ENCODE measurements at regions of chr2 and their contacts with region 1.

Region 1: DNA sequence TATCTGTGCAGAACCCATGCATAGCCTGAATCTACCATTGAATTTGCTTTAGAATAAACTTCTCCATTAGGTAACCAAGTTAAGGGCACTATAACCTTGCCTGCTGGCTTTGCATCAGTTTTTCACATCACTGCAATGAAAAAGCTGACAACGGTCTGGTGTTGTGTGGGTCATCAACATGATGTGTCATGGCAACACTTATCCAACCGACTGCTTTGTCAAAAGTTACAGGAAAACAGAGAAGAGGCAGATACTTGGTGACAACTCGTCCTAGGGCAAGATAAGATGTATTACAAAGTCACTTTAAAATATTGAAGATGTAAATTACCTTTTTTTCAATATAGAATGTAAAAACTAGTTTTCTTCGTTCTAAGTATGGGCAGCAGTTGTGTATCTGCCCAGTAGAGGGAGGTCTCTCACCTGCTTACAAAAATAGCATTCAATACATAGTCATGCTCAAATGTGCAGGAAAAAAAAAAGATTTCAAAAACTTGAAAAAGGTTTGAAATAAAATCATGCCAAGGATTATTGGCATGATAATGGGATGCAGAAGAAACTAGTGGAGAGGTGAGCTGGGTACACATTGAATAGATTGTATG is 96.3 kb downstream of the EVA1A start:
- DNase-seq: no peak
- H3K4me3 Mint-ChIP-seq: no peak overlapping the region
- H3K27ac Mint-ChIP-seq: no peak overlapping the region
- H3K4me1 Mint-ChIP-seq: no peaks in the 10 kb centered on the region
- H3K27me3 Mint-ChIP-seq: peaks cover 19% of the 10 kb centered on the region

Region 2: GRCh38 chr2:75241696-75242095 is 222.8 kb before region 1 on chr2:
- intact Hi-C with region 1: no loop called
- DNase-seq: no peak
- H3K4me3 Mint-ChIP-seq: no peak overlapping the region
- H3K27ac Mint-ChIP-seq: no peak overlapping the region
- H3K4me1 Mint-ChIP-seq: no peaks in the 10 kb centered on the region
- H3K27me3 Mint-ChIP-seq: peaks cover 3% of the 10 kb centered on the region

Region 3: GRCh38 chr2:75608684-75609333 is 144.4 kb after region 1 on chr2:
- intact Hi-C with region 1: loop called (anchors 1 kb)
- DNase-seq: peak; percentile 85
- H3K4me3 Mint-ChIP-seq: no peak overlapping the region
- H3K27ac Mint-ChIP-seq: no peak overlapping the region
- H3K4me1 Mint-ChIP-seq: no peaks in the 10 kb centered on the region
- H3K27me3 Mint-ChIP-seq: peaks cover 37% of the 10 kb centered on the region

Region 4: GRCh38 chr2:75627895-75628504 is 163.6 kb after region 1 on chr2:
- intact Hi-C with region 1: loop called (anchors 1 kb)
- DNase-seq: peak; percentile 86
- H3K4me3 Mint-ChIP-seq: no peak overlapping the region
- H3K27ac Mint-ChIP-seq: no peak overlapping the region
- H3K4me1 Mint-ChIP-seq: no peaks in the 10 kb centered on the region
- H3K27me3 Mint-ChIP-seq: peaks cover 22% of the 10 kb centered on the region